ENCODE measurements at regions of chr7 and their contacts with region 1.

Region 1: GRCh38 chr7:138752568-138753518 is 45.0 kb upstream of the TMEM213 start:
- DNase-seq: peak; percentile 85 to 99 (median 92)
- ATAC-seq: peak; percentile 92
- H3K4me3 ChIP-seq: no peak overlapping the region
- H3K4me3 Mint-ChIP-seq: peak overlapping the region; percentile 38
- H3K27ac ChIP-seq: peak overlapping the region; percentile 73
- H3K27ac Mint-ChIP-seq: peak overlapping the region; percentile 94
- H3K4me1 ChIP-seq: peaks cover 43% of the 10 kb centered on the region
- H3K4me1 Mint-ChIP-seq: peaks cover 67% of the 10 kb centered on the region
- H3K27me3 ChIP-seq: no peaks in the 10 kb centered on the region
- H3K27me3 Mint-ChIP-seq: no peaks in the 10 kb centered on the region
- CTCF ChIP-seq: no peak

Region 2: DNA sequence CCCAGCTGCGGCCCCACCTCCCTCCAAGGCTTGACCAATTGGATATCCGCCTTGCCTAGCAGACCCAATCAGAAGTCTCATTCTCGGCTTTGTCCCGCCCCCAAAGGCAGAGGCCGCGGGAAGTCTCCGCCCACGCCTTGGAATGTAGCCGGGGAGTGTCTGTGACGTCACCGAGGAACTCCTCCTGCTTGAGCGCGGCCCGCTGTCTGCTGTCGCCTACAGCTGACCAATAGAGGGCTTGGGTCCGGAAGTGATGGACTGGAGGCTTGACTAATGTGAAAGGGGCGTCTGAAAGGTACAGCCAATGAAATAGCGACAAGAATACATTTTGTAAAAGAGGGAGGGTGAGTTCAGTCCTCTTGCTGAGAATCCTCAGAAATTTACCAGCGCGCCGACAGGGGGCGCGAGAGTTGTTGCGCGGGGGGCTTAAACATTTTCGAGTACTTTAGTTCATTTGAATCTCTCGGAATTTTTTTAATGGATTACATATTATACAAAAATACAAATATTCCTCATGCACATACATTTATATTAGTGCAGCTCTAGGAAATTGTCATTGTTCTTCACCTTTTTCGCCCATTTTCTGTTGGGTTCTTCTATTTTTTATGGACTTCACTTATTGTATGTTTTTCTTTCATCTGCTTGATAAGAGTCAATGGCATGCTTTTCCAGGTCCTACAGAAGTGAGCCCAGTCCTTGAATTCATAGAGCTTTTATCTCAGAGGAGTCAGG is 750.6 kb before region 1 on chr7:
- CTCF ChIA-PET with region 1: interaction called, 4 read pairs
- POLR2A ChIA-PET with region 1: interaction called, 9 read pairs
- intact Hi-C with region 1: loop called in 1 of 2 experiments (anchors 5 kb)
- DNase-seq: peak; percentile 95 to 100 (median 97)
- ATAC-seq: peak; percentile 87
- H3K4me3 ChIP-seq: peak overlapping the region; percentile 92
- H3K4me3 Mint-ChIP-seq: peak overlapping the region; percentile 93
- H3K27ac ChIP-seq: peak overlapping the region; percentile 67 to 75
- H3K27ac Mint-ChIP-seq: peak overlapping the region; percentile 75
- H3K4me1 ChIP-seq: peaks cover 16% of the 10 kb centered on the region
- H3K4me1 Mint-ChIP-seq: peaks cover 36% of the 10 kb centered on the region
- H3K27me3 ChIP-seq: no peaks in the 10 kb centered on the region
- H3K27me3 Mint-ChIP-seq: no peaks in the 10 kb centered on the region
- CTCF ChIP-seq: peak; percentile 99

Region 3: DNA sequence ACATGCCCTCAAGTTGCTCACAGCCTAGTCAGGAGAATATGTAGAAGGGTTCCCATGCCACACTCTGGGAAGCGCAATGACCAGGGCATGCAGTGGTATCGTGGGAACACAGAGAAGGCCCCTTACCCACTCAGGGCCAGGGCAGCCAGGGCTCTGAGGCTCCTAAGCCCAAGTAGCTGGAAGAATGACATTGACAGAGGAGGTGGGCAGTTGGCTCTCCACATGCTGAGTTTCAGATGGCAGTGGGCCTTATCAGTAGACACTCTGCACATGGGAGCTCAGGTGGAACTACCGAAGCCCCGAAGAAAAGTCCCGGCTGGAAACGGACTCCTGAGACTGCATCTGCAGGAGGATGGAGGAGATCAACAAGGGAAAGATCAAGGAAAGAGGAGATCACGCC is 36.0 kb before region 1 on chr7:
- CTCF ChIA-PET with region 1: no interaction called
- POLR2A ChIA-PET with region 1: no interaction called
- intact Hi-C with region 1: loop called in 1 of 2 experiments (anchors 5 kb)
- DNase-seq: no peak
- ATAC-seq: no peak
- H3K4me3 ChIP-seq: no peak overlapping the region
- H3K4me3 Mint-ChIP-seq: peak overlapping the region; percentile 58
- H3K27ac ChIP-seq: no peak overlapping the region
- H3K27ac Mint-ChIP-seq: peak overlapping the region; percentile 24
- H3K4me1 ChIP-seq: peaks cover 11% of the 10 kb centered on the region
- H3K4me1 Mint-ChIP-seq: peaks cover 19% of the 10 kb centered on the region
- H3K27me3 ChIP-seq: no peaks in the 10 kb centered on the region
- H3K27me3 Mint-ChIP-seq: peaks cover 3% of the 10 kb centered on the region
- CTCF ChIP-seq: no peak

Region 4: DNA sequence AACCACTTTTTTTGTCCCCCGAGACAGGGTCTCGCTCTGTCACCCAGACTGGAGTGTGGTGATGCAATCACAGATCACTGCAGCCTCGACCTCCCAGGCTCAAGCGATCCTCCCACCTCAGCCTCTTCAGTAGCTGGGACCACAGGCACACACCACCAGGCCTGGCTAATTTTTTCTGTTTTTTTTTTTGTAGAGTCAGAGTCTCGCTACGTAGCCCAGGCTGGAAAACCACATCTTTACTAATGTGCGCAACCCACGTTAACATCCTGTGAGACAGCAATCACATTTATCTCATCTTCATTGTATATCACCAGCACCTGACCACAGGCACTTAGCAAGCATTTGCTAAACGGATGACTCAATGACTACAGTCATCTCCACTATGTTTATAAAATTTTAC is 123.0 kb after region 1 on chr7:
- CTCF ChIA-PET with region 1: no interaction called
- POLR2A ChIA-PET with region 1: interaction called, 3 read pairs
- intact Hi-C with region 1: loop called (anchors 2 to 5 kb)
- DNase-seq: peak; percentile 19 to 83 (median 46)
- ATAC-seq: peak; percentile 96
- H3K4me3 ChIP-seq: no peak overlapping the region
- H3K4me3 Mint-ChIP-seq: no peak overlapping the region
- H3K27ac ChIP-seq: no peak overlapping the region
- H3K27ac Mint-ChIP-seq: peak overlapping the region; percentile 26
- H3K4me1 ChIP-seq: peaks cover 6% of the 10 kb centered on the region
- H3K4me1 Mint-ChIP-seq: peaks cover 15% of the 10 kb centered on the region
- H3K27me3 ChIP-seq: no peaks in the 10 kb centered on the region
- H3K27me3 Mint-ChIP-seq: no peaks in the 10 kb centered on the region
- CTCF ChIP-seq: no peak

Region 5: DNA sequence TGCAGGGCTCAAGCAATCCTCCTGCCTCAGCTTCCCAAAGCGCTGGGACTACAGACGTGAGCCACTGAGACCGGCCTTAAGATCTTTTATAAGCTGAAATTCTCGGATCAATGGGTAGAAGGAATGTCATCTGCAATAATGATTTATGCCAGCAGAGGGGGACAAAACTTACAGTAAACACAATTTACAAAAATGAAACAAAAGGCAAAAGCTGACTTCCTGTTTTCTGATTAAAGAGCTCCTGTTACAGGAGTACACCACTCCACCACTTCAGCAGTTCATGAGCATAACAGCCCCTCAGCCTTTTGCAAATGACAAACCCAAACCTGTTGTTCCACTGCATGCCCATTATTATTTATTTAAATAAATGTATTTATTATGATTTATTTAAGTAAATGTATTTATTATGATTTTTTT is 133.7 kb after region 1 on chr7:
- CTCF ChIA-PET with region 1: interaction called, 6 read pairs
- POLR2A ChIA-PET with region 1: interaction called, 10 read pairs
- intact Hi-C with region 1: loop called in 1 of 2 experiments (anchors 5 kb)
- DNase-seq: peak in 8 of 14 experiments; percentile 13 to 85 (median 52)
- ATAC-seq: peak; percentile 95
- H3K4me3 ChIP-seq: no peak overlapping the region
- H3K4me3 Mint-ChIP-seq: no peak overlapping the region
- H3K27ac ChIP-seq: no peak overlapping the region
- H3K27ac Mint-ChIP-seq: peak overlapping the region; percentile 2
- H3K4me1 ChIP-seq: peaks cover 16% of the 10 kb centered on the region
- H3K4me1 Mint-ChIP-seq: peaks cover 20% of the 10 kb centered on the region
- H3K27me3 ChIP-seq: no peaks in the 10 kb centered on the region
- H3K27me3 Mint-ChIP-seq: no peaks in the 10 kb centered on the region
- CTCF ChIP-seq: peak; percentile 75

Region 6: DNA sequence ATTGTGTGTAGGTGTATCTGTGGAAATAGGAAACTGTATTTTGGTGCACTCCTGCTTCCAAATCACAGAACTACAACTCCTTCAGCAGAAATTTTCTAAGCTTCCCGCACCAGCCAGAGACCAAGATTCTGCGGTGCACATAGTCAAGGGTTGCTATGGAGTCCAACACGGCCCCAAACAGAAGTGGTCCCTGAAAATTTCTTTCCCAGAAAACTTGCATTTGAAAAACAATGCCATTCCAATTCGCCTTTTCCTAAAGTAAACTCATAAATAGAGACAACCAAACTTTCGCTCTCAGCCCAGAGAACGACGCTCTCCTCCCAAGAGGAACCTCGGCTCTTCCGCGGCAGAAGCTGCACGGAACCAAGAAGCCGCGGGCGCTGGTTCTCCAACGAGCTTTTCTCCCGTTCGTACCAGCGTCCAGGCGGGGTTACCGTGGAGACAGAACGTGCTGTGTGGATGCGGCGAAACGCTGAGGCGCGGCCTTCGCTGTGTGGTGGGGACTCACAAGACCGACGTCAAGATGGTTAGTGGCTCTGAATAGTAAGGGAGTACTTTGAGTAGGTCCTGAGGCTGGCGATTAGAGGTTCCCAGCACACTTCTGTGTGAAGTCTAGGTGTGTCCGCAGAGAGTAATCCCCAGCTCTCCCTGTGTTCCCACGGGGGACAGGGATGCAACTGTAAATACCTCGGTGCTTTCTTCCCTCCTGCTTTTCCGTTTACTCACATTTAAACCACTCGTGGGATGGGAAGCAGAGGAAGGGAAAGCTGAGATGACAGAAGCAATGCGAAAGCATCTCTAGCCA is 380.7 kb after region 1 on chr7:
- CTCF ChIA-PET with region 1: no interaction called
- POLR2A ChIA-PET with region 1: no interaction called
- intact Hi-C with region 1: loop called in 1 of 2 experiments (anchors 10 kb)
- DNase-seq: peak; percentile 81 to 94 (median 86)
- ATAC-seq: peak; percentile 98
- H3K4me3 ChIP-seq: peak overlapping the region; percentile 68
- H3K4me3 Mint-ChIP-seq: peak overlapping the region; percentile 89
- H3K27ac ChIP-seq: peak overlapping the region; percentile 35 to 65
- H3K27ac Mint-ChIP-seq: peak overlapping the region; percentile 83
- H3K4me1 ChIP-seq: peaks cover 18% of the 10 kb centered on the region
- H3K4me1 Mint-ChIP-seq: peaks cover 14% of the 10 kb centered on the region
- H3K27me3 ChIP-seq: no peaks in the 10 kb centered on the region
- H3K27me3 Mint-ChIP-seq: no peaks in the 10 kb centered on the region
- CTCF ChIP-seq: no peak

Measured in CD4-positive, alpha-beta T cell (primary cell).